Naive thymus-derived CD4-positive, alpha-beta T cell (primary cell): ENCODE measurements at regions of chr12 and their contacts with region 1.

Region 1: DNA sequence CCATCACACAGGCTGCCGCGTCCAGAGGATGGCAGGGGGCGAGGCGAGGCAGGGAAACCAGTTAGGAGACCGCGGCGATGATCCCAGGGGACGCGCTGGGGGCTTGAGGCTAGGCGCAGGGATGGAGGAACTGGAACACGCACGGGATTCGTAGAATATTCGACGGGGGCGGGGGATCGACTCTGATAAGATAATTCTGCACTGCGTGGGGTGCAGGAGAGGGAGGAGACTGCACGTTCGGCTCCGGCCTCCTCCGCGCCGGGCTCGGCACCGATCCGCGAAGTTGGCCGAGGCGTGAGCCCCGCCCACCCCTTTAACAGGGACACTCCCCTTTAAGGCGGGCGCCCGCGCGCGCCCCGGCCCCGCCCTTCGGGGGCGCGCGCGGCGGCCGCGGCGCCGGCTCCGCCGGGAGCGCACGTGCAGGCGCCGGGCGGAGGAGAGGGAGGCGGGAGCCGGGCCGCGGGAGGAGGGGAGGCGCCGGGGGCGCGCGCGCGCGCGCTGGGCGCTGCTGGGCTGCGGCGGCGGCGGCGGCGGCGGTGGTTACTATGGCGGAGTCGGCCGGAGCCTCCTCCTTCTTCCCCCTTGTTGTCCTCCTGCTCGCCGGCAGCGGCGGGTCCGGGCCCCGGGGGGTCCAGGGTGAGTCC is at the start of gene ACVR1B:
- DNase-seq: peak; percentile 80 to 93 (median 89)
- ATAC-seq: peak; percentile 97
- H3K4me3 ChIP-seq: peak within 1 kb of the TSS; percentile 70
- H3K4me3 Mint-ChIP-seq: peak within 1 kb of the TSS; percentile 87 to 100 (median 97)
- H3K27ac ChIP-seq: peak within 1 kb of the TSS; percentile 88
- H3K27ac Mint-ChIP-seq: peak within 1 kb of the TSS; percentile 79 to 97 (median 94)
- H3K4me1 ChIP-seq: peaks cover 16 to 20% of the 10 kb centered on the region in 2 donors
- H3K4me1 Mint-ChIP-seq: peaks cover 25 to 49% (median 39%) of the 10 kb centered on the region in 7 donors
- H3K27me3 ChIP-seq: no peaks in the 10 kb centered on the region
- H3K27me3 Mint-ChIP-seq: peaks cover 0 to 66% (median 0%) of the 10 kb centered on the region in 5 donors
- total RNA-seq, gene ACVR1B: 4.9 to 14.8 (median 14.2) TPM

Region 2: DNA sequence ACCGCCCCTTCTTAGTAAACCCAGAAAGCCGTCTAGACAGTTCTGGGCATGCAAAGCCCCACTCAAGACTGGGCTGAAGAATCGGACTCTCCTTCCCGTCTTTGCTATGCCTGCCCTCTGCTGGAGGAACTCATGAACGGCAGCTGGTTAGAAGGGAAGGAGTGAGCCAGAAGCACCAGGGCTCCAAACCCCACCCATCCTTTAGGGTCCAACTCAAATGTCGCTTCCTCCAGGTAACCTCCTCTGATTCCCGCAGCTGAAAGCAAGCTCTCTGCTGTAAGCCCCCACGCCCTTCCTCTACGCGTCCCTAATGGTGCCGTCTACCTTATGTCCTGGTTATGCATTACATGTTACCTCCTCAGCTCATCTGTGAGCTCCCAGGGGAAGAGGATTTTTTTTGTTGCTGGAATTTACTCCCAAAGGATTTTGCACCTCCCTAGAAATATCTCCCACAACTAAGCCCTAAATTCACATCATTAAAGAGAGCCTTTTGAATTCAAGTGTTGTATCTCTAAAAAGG is 419.3 kb before region 1 on chr12:
- CTCF ChIA-PET with region 1: no interaction called
- POLR2A ChIA-PET with region 1: no interaction called
- intact Hi-C with region 1: loop called in 1 of 2 experiments (anchors 1 kb)
- DNase-seq: peak; percentile 44 to 78 (median 68)
- ATAC-seq: peak; percentile 94
- H3K4me3 ChIP-seq: no peak overlapping the region
- H3K4me3 Mint-ChIP-seq: no peak overlapping the region
- H3K27ac ChIP-seq: no peak overlapping the region
- H3K27ac Mint-ChIP-seq: peak overlapping the region in 5 of 9 donors; percentile 11 to 52 (median 32)
- H3K4me1 ChIP-seq: peaks cover 0 to 4% of the 10 kb centered on the region in 2 donors
- H3K4me1 Mint-ChIP-seq: peaks cover 0 to 11% (median 6%) of the 10 kb centered on the region in 7 donors
- H3K27me3 ChIP-seq: no peaks in the 10 kb centered on the region
- H3K27me3 Mint-ChIP-seq: peaks cover 0 to 32% (median 4%) of the 10 kb centered on the region in 5 donors

Region 3: GRCh38 chr12:51970904-51971646 is 19.8 kb after region 1 on chr12:
- CTCF ChIA-PET with region 1: interaction called, 6 read pairs
- POLR2A ChIA-PET with region 1: interaction called, 7 read pairs
- intact Hi-C with region 1: loop called (anchors 1 to 2 kb)
- DNase-seq: peak in 2 of 9 donors; percentile 26 to 43
- ATAC-seq: peak; percentile 53
- H3K4me3 ChIP-seq: peak overlapping the region; percentile 1
- H3K4me3 Mint-ChIP-seq: peak overlapping the region; percentile 41 to 85 (median 72)
- H3K27ac ChIP-seq: no peak overlapping the region
- H3K27ac Mint-ChIP-seq: peak overlapping the region; percentile 43 to 87 (median 68)
- H3K4me1 ChIP-seq: peaks cover 56 to 64% of the 10 kb centered on the region in 2 donors
- H3K4me1 Mint-ChIP-seq: peaks cover 60 to 76% (median 69%) of the 10 kb centered on the region in 7 donors
- H3K27me3 ChIP-seq: no peaks in the 10 kb centered on the region
- H3K27me3 Mint-ChIP-seq: peaks cover 0 to 26% (median 0%) of the 10 kb centered on the region in 5 donors

Region 4: GRCh38 chr12:51980051-51980808 is 28.9 kb after region 1 on chr12:
- CTCF ChIA-PET with region 1: interaction called, 6 read pairs
- POLR2A ChIA-PET with region 1: interaction called, 5 read pairs
- intact Hi-C with region 1: loop called (anchors 1 to 2 kb)
- DNase-seq: peak; percentile 39 to 76 (median 65)
- ATAC-seq: peak; percentile 99
- H3K4me3 ChIP-seq: no peak overlapping the region
- H3K4me3 Mint-ChIP-seq: peak overlapping the region in 3 of 10 donors; percentile 7 to 45 (median 32)
- H3K27ac ChIP-seq: no peak overlapping the region
- H3K27ac Mint-ChIP-seq: peak overlapping the region in 5 of 9 donors; percentile 25 to 74 (median 48)
- H3K4me1 ChIP-seq: peaks cover 5 to 10% of the 10 kb centered on the region in 2 donors
- H3K4me1 Mint-ChIP-seq: peaks cover 24 to 32% (median 28%) of the 10 kb centered on the region in 7 donors
- H3K27me3 ChIP-seq: no peaks in the 10 kb centered on the region
- H3K27me3 Mint-ChIP-seq: peaks cover 0 to 5% (median 0%) of the 10 kb centered on the region in 5 donors

Region 5: GRCh38 chr12:52004042-52004648 is 52.8 kb after region 1 on chr12:
- CTCF ChIA-PET with region 1: interaction called, 3 read pairs
- POLR2A ChIA-PET with region 1: no interaction called
- intact Hi-C with region 1: loop called in 1 of 2 experiments (anchors 1 kb)
- DNase-seq: no peak
- ATAC-seq: no peak
- H3K4me3 ChIP-seq: no peak overlapping the region
- H3K4me3 Mint-ChIP-seq: no peak overlapping the region
- H3K27ac ChIP-seq: no peak overlapping the region
- H3K27ac Mint-ChIP-seq: peak overlapping the region in 2 of 9 donors; percentile 24 to 67
- H3K4me1 ChIP-seq: peaks cover 0 to 11% of the 10 kb centered on the region in 2 donors
- H3K4me1 Mint-ChIP-seq: peaks cover 6 to 27% (median 19%) of the 10 kb centered on the region in 7 donors
- H3K27me3 ChIP-seq: no peaks in the 10 kb centered on the region
- H3K27me3 Mint-ChIP-seq: peaks cover 0 to 45% (median 0%) of the 10 kb centered on the region in 5 donors

Region 6: GRCh38 chr12:52069327-52070184 is 118.2 kb after region 1 on chr12 and contains the start of gene ATG101:
- CTCF ChIA-PET with region 1: no interaction called
- POLR2A ChIA-PET with region 1: no interaction called
- intact Hi-C with region 1: loop called in 1 of 2 experiments (anchors 1 kb)
- DNase-seq: peak; percentile 80 to 92 (median 89)
- ATAC-seq: peak; percentile 97
- H3K4me3 ChIP-seq: peak within 1 kb of the TSS; percentile 96
- H3K4me3 Mint-ChIP-seq: peak within 1 kb of the TSS; percentile 88 to 99 (median 96)
- H3K27ac ChIP-seq: peak within 1 kb of the TSS; percentile 87
- H3K27ac Mint-ChIP-seq: peak within 1 kb of the TSS; percentile 97 to 100 (median 98)
- H3K4me1 ChIP-seq: peaks cover 19 to 31% of the 10 kb centered on the region in 2 donors
- H3K4me1 Mint-ChIP-seq: peaks cover 35 to 59% (median 49%) of the 10 kb centered on the region in 7 donors
- H3K27me3 ChIP-seq: no peaks in the 10 kb centered on the region
- H3K27me3 Mint-ChIP-seq: peaks cover 0 to 5% (median 0%) of the 10 kb centered on the region in 5 donors
- total RNA-seq, gene ATG101: 20.7 to 39.7 (median 34.3) TPM